ENCODE measurements at regions of chr19 and their contacts with region 1.

Region 1: GRCh38 chr19:35306473-35307246 is 14.7 kb downstream of the MAG start:
- DNase-seq: no peak
- ATAC-seq: peak; percentile 60
- H3K4me3 Mint-ChIP-seq: no peak overlapping the region
- H3K27ac Mint-ChIP-seq: peak overlapping the region; percentile 12
- H3K4me1 Mint-ChIP-seq: peaks cover 56% of the 10 kb centered on the region
- H3K27me3 Mint-ChIP-seq: no peaks in the 10 kb centered on the region
- CTCF ChIP-seq: no peak

Region 2: GRCh38 chr19:35135389-35135909 is 171.2 kb before region 1 on chr19:
- CTCF ChIA-PET with region 1: no interaction called
- POLR2A ChIA-PET with region 1: no interaction called
- intact Hi-C with region 1: no loop called
- DNase-seq: peak; percentile 63
- ATAC-seq: peak; percentile 90
- H3K4me3 Mint-ChIP-seq: no peak overlapping the region
- H3K27ac Mint-ChIP-seq: no peak overlapping the region
- H3K4me1 Mint-ChIP-seq: peaks cover 15% of the 10 kb centered on the region
- H3K27me3 Mint-ChIP-seq: no peaks in the 10 kb centered on the region
- CTCF ChIP-seq: peak; percentile 75

Region 3: DNA sequence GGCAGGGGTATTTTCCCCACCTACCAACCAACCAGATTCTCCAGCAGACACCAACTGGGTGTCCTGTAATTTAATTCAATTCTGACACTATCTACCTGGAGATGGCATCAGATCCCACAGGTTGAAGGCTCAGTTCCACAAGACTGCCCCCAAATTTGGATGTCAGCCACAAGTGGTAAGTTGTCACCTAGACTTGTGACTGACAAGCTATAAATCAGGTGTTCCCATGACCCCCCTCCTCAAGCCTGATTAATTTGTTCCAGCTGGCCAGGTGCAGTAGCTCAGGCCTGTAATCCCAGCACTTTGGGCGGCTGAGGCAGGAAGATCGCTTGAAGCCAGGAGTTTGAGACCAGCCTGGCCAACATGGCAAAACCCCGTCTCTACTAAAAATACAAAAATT is 295.3 kb after region 1 on chr19:
- CTCF ChIA-PET with region 1: no interaction called
- POLR2A ChIA-PET with region 1: interaction called, 12 read pairs
- intact Hi-C with region 1: no loop called
- DNase-seq: no peak
- ATAC-seq: no peak
- H3K4me3 Mint-ChIP-seq: no peak overlapping the region
- H3K27ac Mint-ChIP-seq: no peak overlapping the region
- H3K4me1 Mint-ChIP-seq: no peaks in the 10 kb centered on the region
- H3K27me3 Mint-ChIP-seq: peaks cover 10% of the 10 kb centered on the region
- CTCF ChIP-seq: no peak